Astrocyte of the cerebellum (primary cell): ENCODE measurements at regions of chr22 and their contacts with region 1.

Region 1: DNA sequence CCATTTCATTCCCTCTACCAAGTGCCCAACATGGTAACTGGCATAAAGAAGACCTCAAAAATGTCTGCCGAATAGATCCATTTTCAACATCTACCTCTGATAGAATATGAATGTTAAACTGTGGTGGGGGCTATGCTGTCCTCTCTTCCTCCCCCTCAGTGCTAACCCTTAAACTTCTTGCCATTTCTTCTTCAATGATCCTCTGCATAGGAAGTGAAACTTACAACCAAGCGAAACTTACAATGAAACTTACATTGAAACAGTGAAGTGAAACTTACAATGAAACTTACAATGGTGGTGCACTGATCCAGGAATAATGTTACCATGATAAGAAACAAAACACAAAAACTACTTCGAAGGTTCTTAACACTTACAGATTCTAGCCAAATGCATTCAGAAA is 4.7 kb downstream of the RTCB start:
- DNase-seq: no peak
- H3K4me3 ChIP-seq: no peak overlapping the region
- CTCF ChIP-seq: no peak

Region 2: GRCh38 chr22:32378707-32379272 is 28.5 kb before region 1 on chr22:
- in situ Hi-C with region 1: no loop called
- DNase-seq: no peak
- H3K4me3 ChIP-seq: no peak overlapping the region
- CTCF ChIP-seq: peak; percentile 93

Region 3: GRCh38 chr22:32482708-32483107 is 75.4 kb after region 1 on chr22:
- in situ Hi-C with region 1: loop called (anchors 5 kb)
- DNase-seq: no peak
- H3K4me3 ChIP-seq: no peak overlapping the region
- CTCF ChIP-seq: no peak